AG04450 (cell line): ENCODE measurements at regions of chr11 and their contacts with region 1.

Region 1: GRCh38 chr11:15101072-15101709 is 13.5 kb upstream of the INSC start:
- DNase-seq: peak; percentile 51
- H3K4me3 ChIP-seq: no peak overlapping the region
- H3K27ac ChIP-seq: no peak overlapping the region
- H3K27me3 ChIP-seq: peaks cover 2% of the 10 kb centered on the region
- CTCF ChIP-seq: peak; percentile 98

Region 2: DNA sequence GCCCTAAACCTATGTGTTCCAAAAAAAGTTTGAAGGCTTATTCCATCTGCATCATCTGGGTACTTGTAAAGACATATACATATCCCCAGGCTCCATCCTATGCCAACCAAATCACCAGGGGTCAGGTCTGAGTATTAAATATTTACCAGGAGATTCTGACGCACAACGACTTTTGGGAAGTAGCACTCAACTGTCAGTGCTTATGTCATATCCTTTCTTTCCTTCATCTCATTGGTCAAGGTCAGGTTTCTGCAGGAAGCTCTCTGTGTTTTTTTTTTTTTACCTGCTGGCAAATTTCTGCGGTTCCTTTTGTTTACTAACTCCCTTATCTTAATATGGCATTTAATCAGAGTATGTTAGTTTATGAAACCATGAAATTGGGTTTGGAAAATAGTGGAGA is 186.7 kb before region 1 on chr11:
- CTCF ChIA-PET with region 1: no interaction called
- POLR2A ChIA-PET with region 1: no interaction called
- DNase-seq: no peak
- H3K4me3 ChIP-seq: no peak overlapping the region
- H3K27ac ChIP-seq: no peak overlapping the region
- H3K27me3 ChIP-seq: no peaks in the 10 kb centered on the region
- CTCF ChIP-seq: no peak

Region 3: GRCh38 chr11:15113381-15113780 is 12.2 kb after region 1 on chr11:
- CTCF ChIA-PET with region 1: interaction called, 31 read pairs
- POLR2A ChIA-PET with region 1: no interaction called
- DNase-seq: no peak
- H3K4me3 ChIP-seq: no peak overlapping the region
- H3K27ac ChIP-seq: no peak overlapping the region
- H3K27me3 ChIP-seq: peaks cover 3% of the 10 kb centered on the region
- CTCF ChIP-seq: no peak

Region 4: DNA sequence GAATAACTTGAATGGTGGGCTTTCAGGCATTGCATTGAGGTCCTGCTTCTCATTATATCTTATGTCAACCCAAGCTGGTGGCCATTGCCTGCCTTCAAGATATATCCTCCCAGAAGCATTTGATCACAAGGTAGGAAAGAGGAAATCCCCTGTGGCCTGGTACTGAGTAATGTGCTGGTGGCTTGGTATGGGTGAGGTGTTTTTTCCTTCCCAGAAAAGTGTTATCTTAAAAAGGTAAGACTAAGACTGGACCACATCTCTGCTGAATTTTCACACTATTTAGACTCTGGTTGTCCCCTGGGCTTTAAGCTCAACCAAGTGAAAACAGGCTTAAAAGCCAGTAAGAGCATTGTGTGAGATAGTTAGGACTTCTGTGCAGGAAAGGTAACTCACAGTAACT is 17.2 kb after region 1 on chr11:
- CTCF ChIA-PET with region 1: interaction called, 31 read pairs
- POLR2A ChIA-PET with region 1: no interaction called
- DNase-seq: no peak
- H3K4me3 ChIP-seq: no peak overlapping the region
- H3K27ac ChIP-seq: no peak overlapping the region
- H3K27me3 ChIP-seq: peaks cover 3% of the 10 kb centered on the region
- CTCF ChIP-seq: no peak

Region 5: GRCh38 chr11:15159085-15159484 is 57.9 kb after region 1 on chr11:
- CTCF ChIA-PET with region 1: interaction called, 26 read pairs
- POLR2A ChIA-PET with region 1: no interaction called
- DNase-seq: no peak
- H3K4me3 ChIP-seq: no peak overlapping the region
- H3K27ac ChIP-seq: peak overlapping the region; percentile 43
- H3K27me3 ChIP-seq: no peaks in the 10 kb centered on the region
- CTCF ChIP-seq: peak; percentile 65

Region 6: GRCh38 chr11:15199693-15200092 is 98.5 kb after region 1 on chr11:
- CTCF ChIA-PET with region 1: interaction called, 142 read pairs
- POLR2A ChIA-PET with region 1: no interaction called
- DNase-seq: no peak
- H3K4me3 ChIP-seq: no peak overlapping the region
- H3K27ac ChIP-seq: no peak overlapping the region
- H3K27me3 ChIP-seq: no peaks in the 10 kb centered on the region
- CTCF ChIP-seq: no peak

Region 7: DNA sequence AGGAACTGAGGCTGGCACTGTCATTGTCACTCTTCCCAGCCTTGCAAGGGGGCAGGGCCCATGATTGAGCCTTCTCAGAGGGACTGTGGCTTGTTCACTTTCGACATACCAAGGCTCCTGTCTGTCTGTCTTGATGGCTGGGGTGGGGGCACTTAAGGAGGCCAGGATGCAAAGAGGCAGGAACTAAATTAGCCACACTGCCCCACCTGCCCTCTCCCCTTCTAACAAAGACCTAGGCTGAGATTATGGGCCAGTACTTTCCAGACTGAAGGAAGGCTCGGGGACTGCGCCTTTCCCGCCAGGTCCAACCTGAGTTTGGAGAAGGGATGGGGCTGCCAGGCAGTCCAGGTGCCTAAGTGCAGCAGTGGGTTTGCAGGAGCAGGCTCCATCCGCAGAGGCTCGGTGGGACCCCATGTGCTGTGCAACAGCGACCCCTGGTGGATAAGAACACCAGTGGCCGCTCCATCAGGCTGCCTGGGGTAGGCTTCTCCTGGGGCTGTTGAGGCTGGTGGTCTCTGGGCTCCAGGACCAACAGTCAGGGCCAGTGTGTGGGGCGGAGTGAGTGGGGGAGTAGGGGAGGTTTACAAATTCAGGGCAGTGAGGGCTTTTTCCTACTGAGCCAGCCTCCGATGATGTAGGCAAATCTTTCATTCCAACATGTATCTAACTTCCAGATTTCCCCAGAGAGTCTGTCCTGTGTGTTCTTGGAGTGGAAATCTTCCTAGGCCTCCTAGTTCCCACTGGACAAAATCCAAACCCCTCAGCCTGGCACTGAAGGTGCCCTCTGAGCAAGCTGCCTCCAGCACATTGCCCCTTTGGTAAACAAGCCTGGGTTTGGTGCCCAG is 107.4 kb after region 1 on chr11:
- CTCF ChIA-PET with region 1: interaction called, 142 read pairs
- POLR2A ChIA-PET with region 1: no interaction called
- DNase-seq: peak; percentile 27
- H3K4me3 ChIP-seq: no peak overlapping the region
- H3K27ac ChIP-seq: no peak overlapping the region
- H3K27me3 ChIP-seq: peaks cover 2% of the 10 kb centered on the region
- CTCF ChIP-seq: peak; percentile 91

Region 8: GRCh38 chr11:15216678-15217077 is 115.5 kb after region 1 on chr11:
- CTCF ChIA-PET with region 1: interaction called, 97 read pairs
- POLR2A ChIA-PET with region 1: no interaction called
- DNase-seq: no peak
- H3K4me3 ChIP-seq: no peak overlapping the region
- H3K27ac ChIP-seq: no peak overlapping the region
- H3K27me3 ChIP-seq: no peaks in the 10 kb centered on the region
- CTCF ChIP-seq: peak; percentile 45